AG04450 (cell line): ENCODE measurements at regions of chr1 and their contacts with region 1.

Region 1: DNA sequence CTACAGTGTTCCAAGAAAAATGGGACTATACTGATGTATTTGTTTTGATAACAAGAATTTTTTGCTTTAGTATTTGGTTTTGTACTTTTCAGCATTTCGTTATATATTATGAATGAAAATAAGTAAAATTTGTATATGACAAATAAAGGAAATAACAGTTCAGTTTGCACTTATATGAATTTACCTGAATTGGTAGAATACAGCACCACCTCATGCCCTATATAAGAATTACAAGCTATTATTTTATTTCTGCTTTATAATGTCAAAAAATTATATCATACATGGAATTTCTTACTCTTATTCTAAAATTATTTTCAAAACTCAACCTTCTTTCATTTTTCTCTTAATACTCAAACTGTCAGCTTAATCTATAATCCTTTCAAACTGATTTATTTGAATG is 14.6 kb downstream of the EFCAB7 start:
- DNase-seq: no peak
- H3K4me3 ChIP-seq: no peak overlapping the region
- H3K27ac ChIP-seq: no peak overlapping the region
- H3K27me3 ChIP-seq: no peaks in the 10 kb centered on the region
- CTCF ChIP-seq: peak; percentile 47

Region 2: GRCh38 chr1:63214553-63214952 is 323.4 kb before region 1 on chr1:
- CTCF ChIA-PET with region 1: no interaction called
- POLR2A ChIA-PET with region 1: no interaction called
- DNase-seq: no peak
- H3K4me3 ChIP-seq: no peak overlapping the region
- H3K27ac ChIP-seq: no peak overlapping the region
- H3K27me3 ChIP-seq: no peaks in the 10 kb centered on the region
- CTCF ChIP-seq: no peak

Region 3: GRCh38 chr1:63327417-63328139 is 210.4 kb before region 1 on chr1:
- CTCF ChIA-PET with region 1: interaction called, 18 read pairs
- POLR2A ChIA-PET with region 1: no interaction called
- DNase-seq: peak; percentile 15
- H3K4me3 ChIP-seq: no peak overlapping the region
- H3K27ac ChIP-seq: no peak overlapping the region
- H3K27me3 ChIP-seq: peaks cover 82% of the 10 kb centered on the region
- CTCF ChIP-seq: peak; percentile 79

Region 4: GRCh38 chr1:63522891-63523728 is 14.8 kb before region 1 on chr1 and contains the starts of genes EFCAB7 and ITGB3BP:
- CTCF ChIA-PET with region 1: interaction called, 19 read pairs
- POLR2A ChIA-PET with region 1: no interaction called
- DNase-seq: peak; percentile 88
- H3K4me3 ChIP-seq: peak within 1 kb of the TSS; percentile 71
- H3K27ac ChIP-seq: peak within 1 kb of the TSS; percentile 99
- H3K27me3 ChIP-seq: no peaks in the 10 kb centered on the region
- CTCF ChIP-seq: no peak
- polyA plus RNA-seq, gene EFCAB7: 3.9 and 6.0 TPM in 2 replicates
- polyA plus RNA-seq, gene ITGB3BP: 12.3 and 18.0 TPM in 2 replicates